ENCODE measurements at regions of chr7 and their contacts with region 1.

Region 1: GRCh38 chr7:90655566-90655965 is 59.4 kb downstream of the CDK14 start:
- DNase-seq: no peak
- ATAC-seq: peak; percentile 56
- H3K4me3 Mint-ChIP-seq: peak overlapping the region; percentile 16
- H3K27ac Mint-ChIP-seq: peak overlapping the region; percentile 82
- H3K4me1 Mint-ChIP-seq: peaks cover 54% of the 10 kb centered on the region
- H3K27me3 Mint-ChIP-seq: no peaks in the 10 kb centered on the region
- CTCF ChIP-seq: no peak

Region 2: GRCh38 chr7:90618876-90619275 is 36.7 kb before region 1 on chr7:
- CTCF ChIA-PET with region 1: no interaction called
- POLR2A ChIA-PET with region 1: no interaction called
- intact Hi-C with region 1: loop called (anchors 5 kb)
- DNase-seq: no peak
- ATAC-seq: no peak
- H3K4me3 Mint-ChIP-seq: no peak overlapping the region
- H3K27ac Mint-ChIP-seq: no peak overlapping the region
- H3K4me1 Mint-ChIP-seq: peaks cover 38% of the 10 kb centered on the region
- H3K27me3 Mint-ChIP-seq: no peaks in the 10 kb centered on the region
- CTCF ChIP-seq: no peak

Region 3: DNA sequence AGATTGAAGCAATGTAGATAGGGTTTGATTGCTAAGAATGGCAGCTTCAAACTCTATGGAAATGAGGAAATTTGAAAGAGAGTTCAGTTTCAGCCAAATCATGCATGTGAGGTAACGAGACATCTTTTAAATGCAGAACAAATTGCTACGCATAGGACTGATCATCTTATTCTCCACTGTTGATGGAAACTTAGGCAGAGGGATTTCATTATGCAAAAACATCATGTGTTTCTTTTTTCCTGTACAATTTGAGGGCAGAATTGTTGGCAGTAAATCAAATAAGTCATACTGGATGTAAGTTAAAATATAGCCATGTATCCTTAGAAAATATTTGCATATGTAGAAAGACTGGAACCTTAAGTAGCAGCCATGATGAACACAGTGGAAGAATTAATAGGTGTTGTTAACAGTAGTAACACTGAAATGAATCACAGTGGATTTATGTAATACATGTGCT is 268.0 kb after region 1 on chr7:
- CTCF ChIA-PET with region 1: no interaction called
- POLR2A ChIA-PET with region 1: no interaction called
- intact Hi-C with region 1: no loop called
- DNase-seq: no peak
- ATAC-seq: no peak
- H3K4me3 Mint-ChIP-seq: no peak overlapping the region
- H3K27ac Mint-ChIP-seq: no peak overlapping the region
- H3K4me1 Mint-ChIP-seq: peaks cover 2% of the 10 kb centered on the region
- H3K27me3 Mint-ChIP-seq: no peaks in the 10 kb centered on the region
- CTCF ChIP-seq: no peak

Measured in activated B cell treated with CpG ODN at 0.5 μM for 24 hours (primary cell).